Sigmoid colon (tissue), 7 donors: ENCODE measurements at regions of chr12 and their contacts with region 1.

Region 1: DNA sequence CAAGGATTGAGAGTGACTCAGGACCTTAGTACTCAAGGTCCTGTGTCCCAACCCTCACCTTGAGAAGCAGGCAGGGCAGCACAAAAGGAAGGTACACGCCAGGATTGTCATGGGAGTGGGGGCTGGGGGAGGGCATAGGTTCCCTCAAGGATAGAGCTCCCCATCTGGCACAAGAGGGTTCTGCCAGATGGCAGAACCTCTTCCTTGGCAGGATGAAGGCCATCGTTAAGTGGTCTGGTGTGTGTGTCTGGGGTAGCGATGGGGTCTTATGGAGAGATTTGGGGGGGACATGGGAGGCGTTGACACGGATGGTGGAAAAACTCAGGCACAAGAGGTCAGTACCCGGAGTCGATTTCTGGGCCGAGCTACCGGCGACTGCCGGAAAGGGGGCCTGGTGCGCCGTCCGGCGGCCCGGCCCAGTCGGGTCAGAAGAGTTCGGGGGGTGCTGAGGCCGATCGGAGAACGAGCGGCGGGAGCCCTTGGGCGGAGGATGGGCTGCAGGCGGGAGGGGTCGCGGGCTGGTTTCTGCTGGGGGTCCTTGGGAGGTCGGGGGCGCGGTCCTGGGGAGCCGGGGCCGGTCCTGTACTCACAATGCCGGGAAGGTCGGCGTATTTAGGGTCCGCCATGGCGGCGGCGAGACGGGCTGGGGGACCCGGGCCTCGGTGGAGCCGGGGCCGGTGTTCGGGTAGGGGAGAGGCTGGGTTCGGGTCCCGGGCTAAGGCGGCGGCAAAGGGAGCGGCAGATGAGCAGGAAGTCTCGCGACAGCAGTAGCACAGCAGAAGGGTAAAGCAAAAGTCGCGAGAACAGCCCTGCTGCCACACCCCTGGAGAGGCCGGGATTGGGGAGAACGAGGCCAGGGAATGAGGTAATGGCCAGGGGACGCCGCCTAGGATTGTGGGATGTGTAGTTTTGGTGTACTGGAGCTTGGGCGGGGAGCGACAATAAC is at the start of gene DCTN2:
- DNase-seq: peak; percentile 99
- H3K4me3 ChIP-seq: peak within 1 kb of the TSS; percentile 88 to 99 (median 98)
- H3K27ac ChIP-seq: peak within 1 kb of the TSS; percentile 92 to 97 (median 96)
- H3K4me1 ChIP-seq: peaks cover 0 to 41% (median 32%) of the 10 kb centered on the region in 4 donors
- H3K27me3 ChIP-seq: peaks cover 5 to 23% (median 22%) of the 10 kb centered on the region in 3 donors
- CTCF ChIP-seq: no peak
- EP300 ChIP-seq: no peak
- POLR2A ChIP-seq: no peak
- total RNA-seq, gene DCTN2: 118 to 194 (median 141) TPM

Region 2: DNA sequence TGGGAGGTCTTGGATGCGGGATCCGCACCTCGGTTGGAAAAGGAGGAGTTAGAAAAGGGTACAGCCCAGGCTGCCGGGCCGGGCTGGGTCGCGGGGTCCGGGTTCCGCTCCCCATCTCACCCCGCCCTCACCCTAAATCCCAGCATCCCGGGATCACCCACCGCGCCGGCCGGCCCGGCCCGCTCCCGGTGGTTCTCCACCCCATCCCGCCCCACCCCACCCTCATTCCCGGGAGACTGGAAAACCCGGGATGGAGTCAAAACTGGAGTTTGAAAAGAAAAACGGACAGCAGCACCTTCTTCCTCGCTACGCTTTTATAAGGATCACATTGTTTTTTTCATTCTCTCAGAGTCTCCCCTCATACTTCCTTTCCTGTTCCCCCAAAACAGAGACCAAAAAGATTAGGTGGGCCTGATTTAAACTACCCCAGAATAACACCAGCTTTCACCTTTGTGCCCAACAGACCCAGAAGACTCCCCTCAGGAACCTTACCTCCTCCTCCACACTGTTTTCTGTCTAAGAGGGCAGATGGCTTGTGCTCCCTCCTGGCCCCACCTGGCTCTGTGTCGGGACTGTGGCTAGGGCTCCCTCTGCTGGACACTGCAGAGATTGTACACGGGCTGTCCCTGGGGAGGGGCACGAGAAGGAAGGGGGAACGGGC is 84.3 kb before region 1 on chr12:
- intact Hi-C with region 1: loop called (anchors 2 kb)
- DNase-seq: peak; percentile 95
- H3K4me3 ChIP-seq: peak overlapping the region; percentile 56 to 71 (median 63)
- H3K27ac ChIP-seq: peak overlapping the region; percentile 84 to 91 (median 84)
- H3K4me1 ChIP-seq: peaks cover 8 to 38% (median 27%) of the 10 kb centered on the region in 4 donors
- H3K27me3 ChIP-seq: peaks cover 0 to 13% (median 0%) of the 10 kb centered on the region in 3 donors
- CTCF ChIP-seq: peak; percentile 91 to 98 (median 95)
- EP300 ChIP-seq: no peak
- POLR2A ChIP-seq: no peak

Region 3: DNA sequence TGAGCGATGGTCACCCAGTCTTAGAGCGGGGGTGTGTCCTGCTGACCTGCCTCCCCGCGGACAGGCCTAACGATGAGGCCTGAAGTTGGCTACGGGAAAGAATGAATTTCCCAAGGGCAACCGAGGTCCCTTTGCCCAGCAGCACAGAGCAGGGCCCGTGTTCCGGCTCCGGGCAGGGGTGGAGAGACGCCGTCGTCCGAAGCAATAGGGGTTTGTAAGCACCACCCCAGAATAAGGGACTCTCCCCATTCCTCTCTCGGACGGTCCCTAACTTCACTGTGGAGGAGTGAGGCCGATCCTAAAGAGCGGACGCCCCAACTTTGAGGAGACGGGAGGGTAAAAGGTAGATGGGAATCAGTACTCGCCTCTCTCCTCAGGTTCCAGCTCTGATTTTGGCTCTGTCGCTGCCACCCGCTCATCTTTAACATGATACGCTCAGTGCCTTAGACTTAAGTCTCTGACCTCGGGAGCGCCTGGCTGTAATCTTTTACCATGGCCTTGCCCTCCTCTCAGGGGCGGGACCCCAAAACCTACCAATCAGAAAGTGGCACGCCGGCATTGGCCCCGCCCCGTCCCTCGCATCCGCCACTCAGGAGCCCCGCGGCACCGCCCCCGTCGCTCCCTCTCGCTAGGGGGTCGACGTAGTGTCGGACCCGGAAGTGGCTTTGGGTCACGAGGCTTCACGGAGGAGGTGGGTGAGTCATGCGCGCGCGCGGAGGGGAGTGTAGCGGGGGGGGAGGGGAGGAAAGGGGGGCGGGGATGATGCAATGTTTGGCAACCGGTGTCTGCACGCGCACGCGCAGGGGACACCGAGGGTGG is 26.4 kb before region 1 on chr12 and contains the start of gene DDIT3:
- intact Hi-C with region 1: loop called (anchors 2 kb)
- DNase-seq: peak; percentile 100
- H3K4me3 ChIP-seq: peak within 1 kb of the TSS; percentile 85 to 96 (median 89)
- H3K27ac ChIP-seq: peak within 1 kb of the TSS; percentile 95 to 100 (median 98)
- H3K4me1 ChIP-seq: peaks cover 0 to 66% (median 64%) of the 10 kb centered on the region in 4 donors
- H3K27me3 ChIP-seq: no peaks in the 10 kb centered on the region
- CTCF ChIP-seq: no peak
- EP300 ChIP-seq: peak in 2 of 4 donors; percentile 7 to 82
- POLR2A ChIP-seq: peak; percentile 99
- total RNA-seq, gene DDIT3: 30.7 to 48.5 (median 40.7) TPM

Region 4: GRCh38 chr12:57604992-57605810 is 58.5 kb after region 1 on chr12:
- intact Hi-C with region 1: loop called (anchors 5 kb)
- DNase-seq: peak; percentile 81
- H3K4me3 ChIP-seq: peak overlapping the region; percentile 69 to 90 (median 76)
- H3K27ac ChIP-seq: peak overlapping the region; percentile 97 to 99 (median 98)
- H3K4me1 ChIP-seq: peaks cover 0 to 38% (median 36%) of the 10 kb centered on the region in 4 donors
- H3K27me3 ChIP-seq: no peaks in the 10 kb centered on the region
- CTCF ChIP-seq: no peak
- EP300 ChIP-seq: no peak
- POLR2A ChIP-seq: peak in 1 of 2 donors; percentile 16

Region 5: DNA sequence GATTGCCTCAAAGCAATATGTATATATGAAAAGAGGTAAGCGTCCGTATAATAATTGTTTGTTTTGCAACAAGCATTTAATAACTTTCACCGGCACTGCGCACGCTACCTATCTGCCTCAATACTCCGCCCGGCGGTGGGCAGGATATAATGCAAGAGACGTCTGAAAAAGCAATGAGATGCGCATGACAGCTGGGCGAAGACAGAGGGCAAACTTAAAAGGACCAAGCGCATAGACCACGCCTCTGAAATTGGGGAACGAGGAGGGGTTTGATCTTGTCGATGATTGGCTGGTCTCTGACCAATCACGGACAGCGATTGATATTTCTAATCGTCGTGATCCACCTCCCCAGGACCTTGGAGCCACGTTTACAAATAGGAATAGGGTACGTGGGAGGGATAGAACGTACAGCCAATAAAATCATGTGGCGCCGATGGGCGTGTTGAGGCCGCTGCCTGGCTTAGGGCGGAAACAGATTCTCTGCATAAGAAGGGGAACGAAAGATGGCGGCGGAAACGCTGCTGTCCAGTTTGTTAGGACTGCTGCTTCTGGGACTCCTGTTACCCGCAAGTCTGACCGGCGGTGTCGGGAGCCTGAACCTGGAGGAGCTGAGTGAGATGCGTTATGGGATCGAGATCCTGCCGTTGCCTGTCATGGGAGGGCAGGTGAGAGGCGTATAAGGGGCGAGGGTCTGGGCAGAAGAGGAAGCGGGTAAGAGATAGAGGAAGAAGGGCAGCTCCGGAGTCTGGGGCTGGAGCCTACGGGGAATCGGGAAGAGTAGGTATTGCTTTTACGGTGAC is 147.1 kb after region 1 on chr12 and contains the start of gene OS9:
- intact Hi-C with region 1: loop called (anchors 2 kb)
- DNase-seq: peak; percentile 99
- H3K4me3 ChIP-seq: peak within 1 kb of the TSS; percentile 68 to 94 (median 80)
- H3K27ac ChIP-seq: peak within 1 kb of the TSS; percentile 66 to 88 (median 81)
- H3K4me1 ChIP-seq: peaks cover 0 to 18% (median 12%) of the 10 kb centered on the region in 4 donors
- H3K27me3 ChIP-seq: no peaks in the 10 kb centered on the region
- CTCF ChIP-seq: peak; percentile 58 to 84 (median 74)
- EP300 ChIP-seq: no peak
- POLR2A ChIP-seq: peak; percentile 68 to 69
- total RNA-seq, gene OS9: 122 to 183 (median 156) TPM

Region 6: DNA sequence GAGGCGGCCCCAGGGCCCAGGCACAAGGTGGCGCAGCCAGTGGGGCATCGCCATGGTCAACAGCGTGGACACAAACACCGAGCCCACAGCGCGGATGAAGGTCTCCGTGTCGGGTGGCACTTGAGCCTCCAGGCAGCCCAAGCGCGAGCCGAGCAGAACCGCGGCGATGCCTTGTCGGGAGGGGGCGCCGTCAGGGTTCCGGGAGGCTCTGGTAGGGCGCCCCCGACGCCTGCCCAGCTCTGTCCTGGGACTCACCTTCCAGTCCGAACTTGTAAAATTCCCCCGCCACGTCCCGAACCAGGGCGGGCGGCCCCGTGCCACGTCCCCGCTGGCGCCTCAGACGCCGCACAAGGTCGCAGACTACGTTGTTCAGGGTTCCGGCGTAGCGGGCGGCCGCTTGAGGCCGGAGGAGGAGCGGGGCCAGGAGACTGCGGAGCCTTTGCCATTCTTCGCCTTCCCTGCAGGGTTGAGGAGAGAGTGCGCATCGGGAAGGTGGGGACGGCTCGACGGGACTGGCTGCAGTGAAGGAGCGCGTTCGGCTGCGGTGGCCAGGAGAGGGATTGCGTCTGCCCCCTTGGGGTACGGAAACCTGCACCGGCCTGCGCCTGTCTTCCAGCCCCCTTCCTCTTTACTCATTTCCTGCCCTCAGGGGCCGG is 218.5 kb after region 1 on chr12:
- intact Hi-C with region 1: no loop called
- DNase-seq: no peak
- H3K4me3 ChIP-seq: peak overlapping the region in 3 of 4 donors; percentile 20 to 38 (median 33)
- H3K27ac ChIP-seq: no peak overlapping the region
- H3K4me1 ChIP-seq: peaks cover 0 to 30% (median 26%) of the 10 kb centered on the region in 4 donors
- H3K27me3 ChIP-seq: peaks cover 36 to 57% (median 47%) of the 10 kb centered on the region in 3 donors
- CTCF ChIP-seq: no peak
- EP300 ChIP-seq: no peak
- POLR2A ChIP-seq: no peak